Esophagus muscularis mucosa (tissue), 4 donors: ENCODE measurements at regions of chr12 and their contacts with region 1.

Region 1: GRCh38 chr12:110546339-110546738 is 36.8 kb downstream of the PPTC7 start:
- DNase-seq: no peak
- H3K4me3 ChIP-seq: no peak overlapping the region
- H3K27ac ChIP-seq: peak overlapping the region; percentile 83 to 92 (median 89)
- H3K4me1 ChIP-seq: peaks cover 63 to 100% (median 100%) of the 10 kb centered on the region in 4 donors
- H3K27me3 ChIP-seq: no peaks in the 10 kb centered on the region
- CTCF ChIP-seq: no peak
- EP300 ChIP-seq: no peak
- POLR2A ChIP-seq: no peak

Region 2: DNA sequence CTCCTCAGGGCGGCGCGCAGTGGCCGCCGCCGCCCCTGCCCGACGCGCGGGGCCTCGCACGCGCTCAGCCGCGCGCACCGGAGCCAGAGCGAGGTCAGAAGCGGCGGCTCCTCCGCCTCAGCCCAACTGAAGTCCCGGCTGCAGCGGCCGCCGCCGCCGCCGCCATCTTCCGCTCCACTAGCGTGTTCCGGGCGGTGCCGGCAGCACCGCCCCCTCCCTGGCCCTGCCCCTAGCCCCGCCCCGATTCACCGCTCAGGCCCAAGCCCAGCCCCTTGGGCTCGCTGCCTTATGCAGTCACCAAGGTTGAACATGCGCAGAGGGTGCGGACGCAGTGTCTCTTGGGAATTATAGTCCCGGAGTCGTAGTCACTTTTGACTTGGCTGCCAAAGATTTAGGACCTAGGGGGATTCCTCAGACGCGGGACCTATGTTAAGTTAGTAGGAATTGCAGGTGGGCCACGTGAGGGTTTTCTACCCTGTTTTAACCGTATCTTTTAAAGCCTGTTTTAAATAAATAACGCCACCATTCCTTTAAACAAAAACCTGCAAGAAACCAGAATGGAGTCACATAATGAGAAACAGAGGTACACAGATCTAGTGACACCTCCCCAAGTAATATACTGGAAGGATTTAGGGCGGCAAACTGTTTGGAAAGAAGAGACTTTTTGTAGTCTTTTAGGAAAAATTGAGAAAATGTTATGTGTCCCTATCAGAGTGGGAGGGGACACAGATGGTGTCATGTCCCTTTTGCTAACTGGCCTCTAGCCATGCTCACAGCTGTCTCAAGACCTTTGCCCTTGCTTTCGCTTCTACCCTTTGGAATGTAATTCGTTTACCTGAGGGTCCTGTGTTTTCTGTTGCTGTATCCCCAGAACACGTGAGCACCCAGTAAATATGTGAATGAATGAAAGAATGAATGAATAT is 37.1 kb after region 1 on chr12 and contains the start of gene PPTC7:
- intact Hi-C with region 1: loop called (anchors 5 kb)
- DNase-seq: peak; percentile 98
- H3K4me3 ChIP-seq: peak within 1 kb of the TSS; percentile 84 to 95 (median 86)
- H3K27ac ChIP-seq: peak within 1 kb of the TSS; percentile 96 to 98 (median 96)
- H3K4me1 ChIP-seq: peaks cover 58 to 75% (median 68%) of the 10 kb centered on the region in 4 donors
- H3K27me3 ChIP-seq: no peaks in the 10 kb centered on the region
- CTCF ChIP-seq: peak in 1 of 3 experiments; percentile 15
- EP300 ChIP-seq: no peak
- POLR2A ChIP-seq: peak; percentile 48
- total RNA-seq, gene PPTC7: 36.6 to 55.6 (median 53.2) TPM

Region 3: DNA sequence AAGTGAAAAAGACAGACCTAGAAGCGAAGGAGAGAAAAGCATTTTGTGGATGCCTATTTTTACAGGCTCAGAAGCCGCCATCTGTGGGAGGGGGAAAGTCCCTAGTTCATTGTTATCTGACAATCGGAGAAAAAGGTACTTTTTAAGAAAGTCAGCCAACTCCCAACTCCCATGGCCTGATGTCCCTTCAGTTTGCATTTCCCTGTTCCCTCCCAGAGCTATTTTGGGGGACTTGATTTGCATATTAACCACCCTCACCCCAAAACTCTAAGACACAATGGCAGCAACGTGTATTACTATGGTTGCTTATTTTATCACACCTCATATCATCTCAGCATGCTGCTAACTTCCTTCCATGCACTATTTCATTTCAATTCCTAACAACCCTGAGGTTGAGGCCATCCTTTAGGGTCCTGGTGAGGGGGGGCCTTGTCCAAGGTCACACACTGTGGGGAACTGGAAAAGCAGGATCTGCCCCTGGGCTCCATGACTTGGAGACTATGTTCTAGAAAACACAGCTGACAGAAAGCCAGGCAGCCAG is 123.9 kb after region 1 on chr12:
- intact Hi-C with region 1: no loop called
- DNase-seq: no peak
- H3K4me3 ChIP-seq: no peak overlapping the region
- H3K27ac ChIP-seq: no peak overlapping the region
- H3K4me1 ChIP-seq: no peaks in the 10 kb centered on the region
- H3K27me3 ChIP-seq: no peaks in the 10 kb centered on the region
- CTCF ChIP-seq: no peak
- EP300 ChIP-seq: no peak
- POLR2A ChIP-seq: no peak

Region 4: DNA sequence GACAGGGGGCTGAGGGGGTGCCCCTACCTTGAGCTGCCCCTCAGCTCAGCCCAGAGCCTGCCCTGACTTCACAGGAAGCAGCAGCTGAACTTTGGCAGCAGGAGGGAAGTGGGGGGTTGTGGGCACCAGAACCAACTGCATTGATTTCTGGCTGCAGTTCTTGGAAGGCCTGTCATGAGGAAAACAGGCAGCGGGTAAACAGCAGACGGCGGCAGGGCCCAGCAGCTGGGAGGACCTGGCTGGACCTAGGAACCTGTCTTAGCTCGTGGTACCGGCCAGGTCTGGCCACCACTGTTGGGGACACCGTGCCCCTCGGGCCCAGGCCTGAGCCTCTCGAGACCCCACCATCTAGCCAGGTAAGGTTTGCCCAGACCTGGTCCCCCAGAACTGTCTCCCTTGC is 528.2 kb after region 1 on chr12:
- intact Hi-C with region 1: no loop called
- DNase-seq: no peak
- H3K4me3 ChIP-seq: no peak overlapping the region
- H3K27ac ChIP-seq: no peak overlapping the region
- H3K4me1 ChIP-seq: no peaks in the 10 kb centered on the region
- H3K27me3 ChIP-seq: peaks cover 0 to 34% (median 0%) of the 10 kb centered on the region in 4 donors
- CTCF ChIP-seq: no peak
- EP300 ChIP-seq: no peak
- POLR2A ChIP-seq: no peak